CD8-positive, alpha-beta T cell (primary cell): ENCODE measurements at regions of chr1 and their contacts with region 1.

Region 1: DNA sequence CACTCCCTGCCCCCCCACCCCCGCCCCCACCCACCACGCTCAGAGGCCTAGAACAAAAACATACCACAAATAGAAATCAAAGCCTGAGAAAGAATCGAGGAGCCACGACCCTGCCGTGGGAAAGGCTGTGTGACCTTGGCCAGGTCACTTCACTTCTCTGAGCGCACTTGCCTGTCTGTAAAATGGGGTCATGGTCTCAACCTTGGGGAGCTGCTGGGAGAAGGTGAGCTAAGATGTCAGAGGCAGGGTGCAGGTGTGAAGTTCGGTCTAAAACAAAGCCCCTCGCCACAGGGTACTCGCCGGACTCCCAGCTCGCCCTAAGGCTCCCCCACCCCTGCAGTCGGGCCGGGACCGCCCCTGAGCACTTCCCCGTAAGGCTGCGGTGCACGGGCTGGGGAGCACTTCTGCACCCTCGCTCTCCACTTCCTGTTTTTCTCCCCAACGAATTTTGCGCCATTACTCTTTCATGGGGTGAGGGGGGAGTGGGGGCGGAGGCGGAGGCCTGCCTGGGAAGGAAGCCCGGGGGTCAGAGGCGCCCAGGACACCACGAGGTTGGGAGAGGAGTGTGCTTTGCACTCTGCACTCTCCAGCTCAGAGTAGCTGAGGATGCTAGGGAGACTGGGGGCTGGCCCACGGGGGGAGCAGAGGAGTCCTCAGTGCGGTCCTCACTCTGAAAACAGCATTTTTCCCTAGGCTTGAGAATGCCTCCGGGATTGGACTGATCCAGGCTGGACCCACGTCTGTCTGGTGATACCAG is 21.9 kb upstream of the PIK3CD start:
- DNase-seq: peak; percentile 50 to 92 (median 83)
- ATAC-seq: peak; percentile 42
- H3K4me3 ChIP-seq: peak overlapping the region; percentile 85 to 98
- H3K4me3 Mint-ChIP-seq: peak overlapping the region; percentile 98
- H3K27ac ChIP-seq: peak overlapping the region; percentile 79 to 81
- H3K27ac Mint-ChIP-seq: peak overlapping the region; percentile 98
- H3K4me1 ChIP-seq: peaks cover 66% of the 10 kb centered on the region
- H3K4me1 Mint-ChIP-seq: peaks cover 68% of the 10 kb centered on the region
- H3K27me3 ChIP-seq: no peaks in the 10 kb centered on the region
- H3K27me3 Mint-ChIP-seq: no peaks in the 10 kb centered on the region
- CTCF ChIP-seq: no peak

Region 2: GRCh38 chr1:9352377-9353134 is 277.1 kb before region 1 on chr1:
- CTCF ChIA-PET with region 1: no interaction called
- POLR2A ChIA-PET with region 1: no interaction called
- intact Hi-C with region 1: no loop called
- DNase-seq: no peak
- ATAC-seq: no peak
- H3K4me3 ChIP-seq: no peak overlapping the region
- H3K4me3 Mint-ChIP-seq: no peak overlapping the region
- H3K27ac ChIP-seq: no peak overlapping the region
- H3K27ac Mint-ChIP-seq: no peak overlapping the region
- H3K4me1 ChIP-seq: no peaks in the 10 kb centered on the region
- H3K4me1 Mint-ChIP-seq: no peaks in the 10 kb centered on the region
- H3K27me3 ChIP-seq: no peaks in the 10 kb centered on the region
- H3K27me3 Mint-ChIP-seq: no peaks in the 10 kb centered on the region
- CTCF ChIP-seq: no peak

Region 3: GRCh38 chr1:9643351-9644256 is 14.0 kb after region 1 on chr1:
- CTCF ChIA-PET with region 1: interaction called, 129 read pairs
- POLR2A ChIA-PET with region 1: interaction called, 91 read pairs
- intact Hi-C with region 1: no loop called
- DNase-seq: peak in 5 of 9 experiments; percentile 26 to 60 (median 34)
- ATAC-seq: peak; percentile 24
- H3K4me3 ChIP-seq: no peak overlapping the region
- H3K4me3 Mint-ChIP-seq: peak overlapping the region; percentile 66
- H3K27ac ChIP-seq: peak overlapping the region in 1 of 2 experiments; percentile 28
- H3K27ac Mint-ChIP-seq: peak overlapping the region; percentile 88
- H3K4me1 ChIP-seq: peaks cover 75% of the 10 kb centered on the region
- H3K4me1 Mint-ChIP-seq: peaks cover 72% of the 10 kb centered on the region
- H3K27me3 ChIP-seq: no peaks in the 10 kb centered on the region
- H3K27me3 Mint-ChIP-seq: no peaks in the 10 kb centered on the region
- CTCF ChIP-seq: no peak

Region 4: GRCh38 chr1:9671377-9672140 is 41.9 kb after region 1 on chr1:
- CTCF ChIA-PET with region 1: interaction called, 47 read pairs
- POLR2A ChIA-PET with region 1: interaction called, 38 read pairs
- intact Hi-C with region 1: no loop called
- DNase-seq: peak in 1 of 9 experiments; percentile 29
- ATAC-seq: peak; percentile 76
- H3K4me3 ChIP-seq: no peak overlapping the region
- H3K4me3 Mint-ChIP-seq: no peak overlapping the region
- H3K27ac ChIP-seq: peak overlapping the region in 1 of 2 experiments; percentile 39
- H3K27ac Mint-ChIP-seq: peak overlapping the region; percentile 87
- H3K4me1 ChIP-seq: peaks cover 82% of the 10 kb centered on the region
- H3K4me1 Mint-ChIP-seq: peaks cover 71% of the 10 kb centered on the region
- H3K27me3 ChIP-seq: no peaks in the 10 kb centered on the region
- H3K27me3 Mint-ChIP-seq: no peaks in the 10 kb centered on the region
- CTCF ChIP-seq: no peak

Region 5: GRCh38 chr1:9700340-9700739 is 70.7 kb after region 1 on chr1:
- CTCF ChIA-PET with region 1: interaction called, 15 read pairs
- POLR2A ChIA-PET with region 1: interaction called, 7 read pairs
- intact Hi-C with region 1: no loop called
- DNase-seq: no peak
- ATAC-seq: no peak
- H3K4me3 ChIP-seq: no peak overlapping the region
- H3K4me3 Mint-ChIP-seq: no peak overlapping the region
- H3K27ac ChIP-seq: no peak overlapping the region
- H3K27ac Mint-ChIP-seq: peak overlapping the region; percentile 86
- H3K4me1 ChIP-seq: peaks cover 49% of the 10 kb centered on the region
- H3K4me1 Mint-ChIP-seq: peaks cover 68% of the 10 kb centered on the region
- H3K27me3 ChIP-seq: no peaks in the 10 kb centered on the region
- H3K27me3 Mint-ChIP-seq: no peaks in the 10 kb centered on the region
- CTCF ChIP-seq: no peak

Region 6: DNA sequence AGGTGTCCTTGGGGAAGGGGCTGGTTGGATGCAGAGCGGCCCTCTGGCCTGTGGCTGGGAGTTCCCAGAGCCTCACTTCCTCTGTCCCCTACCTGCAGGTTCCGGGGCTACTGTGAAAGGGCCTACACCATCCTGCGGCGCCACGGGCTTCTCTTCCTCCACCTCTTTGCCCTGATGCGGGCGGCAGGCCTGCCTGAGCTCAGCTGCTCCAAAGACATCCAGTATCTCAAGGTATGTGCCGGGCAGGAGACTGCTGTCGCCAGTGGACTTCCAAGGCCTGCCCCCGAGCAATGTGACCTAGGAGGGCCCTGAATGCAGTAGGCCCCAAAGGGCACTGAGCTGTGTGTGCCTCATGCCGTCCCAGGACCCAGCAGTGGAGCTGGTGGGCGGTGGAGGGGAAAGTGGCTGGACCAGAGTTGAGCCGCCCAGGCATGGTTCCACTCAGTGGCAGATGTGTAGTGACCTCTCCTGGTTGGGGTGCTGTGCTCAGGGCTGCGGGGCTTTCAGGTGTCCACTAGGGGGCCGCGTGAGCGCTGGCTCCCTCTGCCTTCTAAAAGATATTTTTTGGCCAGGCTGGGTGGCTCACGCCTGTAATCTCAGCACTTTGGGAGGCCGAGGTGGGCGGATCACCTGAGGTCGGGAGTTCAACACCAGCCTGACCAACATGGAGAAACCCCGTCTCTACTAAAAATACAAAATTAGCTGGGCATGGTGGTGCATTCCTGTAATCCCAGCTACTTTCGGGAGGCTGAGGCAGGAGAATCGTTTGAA is 95.3 kb after region 1 on chr1:
- CTCF ChIA-PET with region 1: interaction called, 319 read pairs
- POLR2A ChIA-PET with region 1: interaction called, 323 read pairs
- intact Hi-C with region 1: loop called (anchors 1 kb)
- DNase-seq: peak; percentile 47 to 84 (median 75)
- ATAC-seq: peak; percentile 47
- H3K4me3 ChIP-seq: no peak overlapping the region
- H3K4me3 Mint-ChIP-seq: peak overlapping the region; percentile 8
- H3K27ac ChIP-seq: peak overlapping the region in 1 of 2 experiments; percentile 16
- H3K27ac Mint-ChIP-seq: peak overlapping the region; percentile 80
- H3K4me1 ChIP-seq: peaks cover 82% of the 10 kb centered on the region
- H3K4me1 Mint-ChIP-seq: peaks cover 71% of the 10 kb centered on the region
- H3K27me3 ChIP-seq: no peaks in the 10 kb centered on the region
- H3K27me3 Mint-ChIP-seq: no peaks in the 10 kb centered on the region
- CTCF ChIP-seq: peak; percentile 97

Region 7: DNA sequence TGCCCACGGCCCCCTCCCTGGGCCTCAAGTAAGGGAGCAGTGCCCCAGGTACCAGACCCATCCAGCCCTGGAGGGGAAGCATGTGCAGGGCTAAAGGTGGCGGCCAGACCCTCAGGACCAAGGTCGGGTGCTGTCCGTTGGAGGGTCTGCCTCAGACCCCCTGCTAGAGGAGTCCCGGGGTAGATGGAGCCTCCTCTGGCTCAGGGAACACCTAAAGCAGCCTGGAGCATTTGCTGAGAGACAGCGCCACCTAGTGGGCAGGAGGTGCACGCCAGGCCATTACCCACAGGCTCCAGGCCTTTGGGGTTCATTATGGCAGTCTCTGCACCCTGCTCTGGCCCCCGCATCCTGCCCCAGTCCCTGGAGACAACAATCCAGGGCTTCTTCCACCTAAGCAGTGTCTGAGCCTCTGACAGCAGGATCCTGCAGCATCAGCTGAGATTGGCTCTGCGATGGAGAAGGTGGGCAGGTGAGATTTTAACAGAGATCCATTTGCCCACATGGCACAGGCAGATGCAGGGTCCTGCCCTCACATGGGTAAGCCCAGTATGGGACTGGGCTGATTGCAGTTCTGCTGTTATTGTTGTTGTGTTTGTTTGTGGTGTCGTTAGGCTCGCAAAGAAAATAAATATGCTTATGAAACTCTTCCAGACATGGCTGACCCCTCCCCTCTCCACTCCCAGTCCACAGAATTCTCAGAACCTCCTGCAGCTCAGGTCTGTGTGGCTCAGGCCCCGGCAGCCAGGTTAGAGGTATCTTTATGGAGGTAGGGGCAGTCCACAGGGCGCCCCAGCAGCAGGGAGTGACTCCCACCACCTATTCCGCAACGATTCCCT is 238.0 kb after region 1 on chr1:
- CTCF ChIA-PET with region 1: interaction called, 55 read pairs
- POLR2A ChIA-PET with region 1: interaction called, 3 read pairs
- intact Hi-C with region 1: loop called (anchors 1 kb)
- DNase-seq: peak; percentile 76 to 95 (median 88)
- ATAC-seq: peak; percentile 99
- H3K4me3 ChIP-seq: no peak overlapping the region
- H3K4me3 Mint-ChIP-seq: no peak overlapping the region
- H3K27ac ChIP-seq: no peak overlapping the region
- H3K27ac Mint-ChIP-seq: no peak overlapping the region
- H3K4me1 ChIP-seq: no peaks in the 10 kb centered on the region
- H3K4me1 Mint-ChIP-seq: no peaks in the 10 kb centered on the region
- H3K27me3 ChIP-seq: no peaks in the 10 kb centered on the region
- H3K27me3 Mint-ChIP-seq: no peaks in the 10 kb centered on the region
- CTCF ChIP-seq: peak; percentile 91